K562 (cell line): ENCODE measurements at regions of chr1 and their contacts with region 1.

Region 1: GRCh38 chr1:109671067-109671466 is 3.2 kb downstream of the GSTM2 start:
- DNase-seq: peak in 2 of 4 experiments; percentile 3 to 4
- ATAC-seq: no peak
- H3K4me3 ChIP-seq: no peak overlapping the region
- H3K27ac ChIP-seq: no peak overlapping the region
- H3K4me1 ChIP-seq: peaks cover 4 to 15% of the 10 kb centered on the region in 2 experiments; a peak in 4 of 5 replicates
- H3K27me3 ChIP-seq: no peaks in the 10 kb centered on the region; a peak in 1 of 5 replicates
- CTCF ChIP-seq: no peak
- EP300 ChIP-seq: no peak
- POLR2A ChIP-seq: no peak
- RAD21 ChIP-seq: no peak

Region 2: GRCh38 chr1:109704173-109704572 is 33.1 kb after region 1 on chr1:
- CTCF ChIA-PET with region 1: no interaction called
- POLR2A ChIA-PET with region 1: interaction called, 3 read pairs
- in situ Hi-C with region 1: no loop called
- intact Hi-C with region 1: loop called (anchors 5 kb)
- DNase-seq: peak; percentile 2 to 11 (median 6)
- ATAC-seq: no peak
- H3K4me3 ChIP-seq: no peak overlapping the region
- H3K27ac ChIP-seq: no peak overlapping the region
- H3K4me1 ChIP-seq: no peaks in the 10 kb centered on the region
- H3K27me3 ChIP-seq: peaks cover 0 to 8% of the 10 kb centered on the region in 2 experiments; a peak in 2 of 5 replicates
- CTCF ChIP-seq: peak in 2 of 3 experiments; percentile 10 to 44; a peak in 2 of 6 replicates
- EP300 ChIP-seq: no peak
- POLR2A ChIP-seq: no peak
- RAD21 ChIP-seq: peak in 1 of 2 experiments; percentile 25; a peak in 1 of 4 replicates